Colonic mucosa (tissue), 4 donors: ENCODE measurements at regions of chr19 and their contacts with region 1.

Region 1: GRCh38 chr19:41785653-41786052 is 10.7 kb upstream of the CEACAM3 start:
- DNase-seq: peak; percentile 81
- H3K4me3 ChIP-seq: no peak overlapping the region
- H3K27ac ChIP-seq: peak overlapping the region; percentile 72
- H3K4me1 ChIP-seq: peaks cover 11% of the 10 kb centered on the region
- H3K27me3 ChIP-seq: no peaks in the 10 kb centered on the region
- CTCF ChIP-seq: peak; percentile 74

Region 2: GRCh38 chr19:41734617-41735016 is 51.0 kb before region 1 on chr19:
- intact Hi-C with region 1: no loop called
- DNase-seq: peak; percentile 90
- H3K4me3 ChIP-seq: no peak overlapping the region
- H3K27ac ChIP-seq: peak overlapping the region; percentile 86
- H3K4me1 ChIP-seq: peaks cover 8% of the 10 kb centered on the region
- H3K27me3 ChIP-seq: no peaks in the 10 kb centered on the region
- CTCF ChIP-seq: no peak

Region 3: GRCh38 chr19:41753936-41754529 is 31.6 kb before region 1 on chr19:
- intact Hi-C with region 1: loop called (anchors 2 kb)
- DNase-seq: peak; percentile 86
- H3K4me3 ChIP-seq: no peak overlapping the region
- H3K27ac ChIP-seq: no peak overlapping the region
- H3K4me1 ChIP-seq: peaks cover 10% of the 10 kb centered on the region
- H3K27me3 ChIP-seq: no peaks in the 10 kb centered on the region
- CTCF ChIP-seq: peak; percentile 60